GM12878 (cell line): ENCODE measurements at regions of chr3 and their contacts with region 1.

Region 1: DNA sequence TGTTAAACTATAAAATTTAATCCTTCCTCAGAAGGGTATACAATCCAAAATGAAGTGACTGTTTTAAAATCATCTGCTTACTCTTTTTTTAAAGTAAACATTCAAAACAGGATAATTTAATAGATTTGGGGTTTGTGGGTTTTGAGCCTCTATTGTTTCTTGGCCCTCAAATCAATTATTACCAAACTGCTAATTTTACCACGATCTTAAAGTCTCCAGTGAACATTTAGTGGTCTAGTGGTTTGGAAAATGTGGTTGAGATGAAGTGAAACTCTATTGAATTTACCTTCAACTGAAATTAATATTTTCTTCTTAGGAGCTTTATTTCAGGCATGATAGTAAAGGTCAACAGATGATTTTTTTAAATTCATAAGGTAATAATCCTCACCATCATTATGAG is 11.2 kb upstream of the ATP11B start:
- DNase-seq: no peak
- ATAC-seq: peak; percentile 66
- H3K4me3 ChIP-seq: no peak overlapping the region
- H3K27ac ChIP-seq: no peak overlapping the region
- H3K4me1 ChIP-seq: peaks cover 6% of the 10 kb centered on the region; the same call in 1 of the 2 replicates
- H3K27me3 ChIP-seq: no peaks in the 10 kb centered on the region; a peak in 2 of 4 replicates
- CTCF ChIP-seq: no peak
- EP300 ChIP-seq: peak in 1 of 2 experiments; percentile 16; a peak in 1 of 4 replicates
- POLR2A ChIP-seq: no peak
- RAD21 ChIP-seq: no peak

Region 2: DNA sequence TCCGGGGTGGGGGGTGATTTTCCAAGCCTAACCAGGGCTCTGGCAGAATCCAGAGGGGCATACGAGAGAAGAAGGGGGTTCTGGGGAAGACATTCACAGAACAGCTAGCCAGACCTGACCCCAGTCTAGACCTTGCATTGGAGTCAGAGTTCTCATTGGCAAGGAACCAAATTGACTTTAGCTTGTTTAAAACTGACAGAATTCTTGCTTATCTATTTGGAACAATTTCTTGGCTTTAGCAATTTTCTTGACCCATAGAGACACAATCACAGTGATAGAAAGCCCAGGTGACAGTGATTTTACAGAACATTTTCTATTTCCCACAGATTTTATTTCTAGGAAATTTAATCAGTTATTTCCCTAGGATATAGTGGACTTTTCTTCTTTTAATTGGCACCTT is 12.5 kb before region 1 on chr3:
- CTCF ChIA-PET with region 1: interaction called, 3 read pairs
- POLR2A ChIA-PET with region 1: no interaction called
- RAD21 ChIA-PET with region 1: interaction called, 3 read pairs
- SMC1A ChIA-PET with region 1: interaction called, 11 read pairs
- in situ Hi-C with region 1: no loop called
- intact Hi-C with region 1: no loop called
- DNase-seq: no peak
- ATAC-seq: no peak
- H3K4me3 ChIP-seq: no peak overlapping the region
- H3K27ac ChIP-seq: no peak overlapping the region
- H3K4me1 ChIP-seq: no peaks in the 10 kb centered on the region
- H3K27me3 ChIP-seq: no peaks in the 10 kb centered on the region
- CTCF ChIP-seq: no peak
- EP300 ChIP-seq: no peak
- POLR2A ChIP-seq: no peak
- RAD21 ChIP-seq: no peak